Left cardiac atrium (tissue), 4 donors: ENCODE measurements at regions of chr6 and their contacts with region 1.

Region 1: GRCh38 chr6:148250975-148251685 is 91.5 kb upstream of the SASH1 start:
- DNase-seq: no peak
- ATAC-seq: peak; percentile 72 to 73

Region 2: DNA sequence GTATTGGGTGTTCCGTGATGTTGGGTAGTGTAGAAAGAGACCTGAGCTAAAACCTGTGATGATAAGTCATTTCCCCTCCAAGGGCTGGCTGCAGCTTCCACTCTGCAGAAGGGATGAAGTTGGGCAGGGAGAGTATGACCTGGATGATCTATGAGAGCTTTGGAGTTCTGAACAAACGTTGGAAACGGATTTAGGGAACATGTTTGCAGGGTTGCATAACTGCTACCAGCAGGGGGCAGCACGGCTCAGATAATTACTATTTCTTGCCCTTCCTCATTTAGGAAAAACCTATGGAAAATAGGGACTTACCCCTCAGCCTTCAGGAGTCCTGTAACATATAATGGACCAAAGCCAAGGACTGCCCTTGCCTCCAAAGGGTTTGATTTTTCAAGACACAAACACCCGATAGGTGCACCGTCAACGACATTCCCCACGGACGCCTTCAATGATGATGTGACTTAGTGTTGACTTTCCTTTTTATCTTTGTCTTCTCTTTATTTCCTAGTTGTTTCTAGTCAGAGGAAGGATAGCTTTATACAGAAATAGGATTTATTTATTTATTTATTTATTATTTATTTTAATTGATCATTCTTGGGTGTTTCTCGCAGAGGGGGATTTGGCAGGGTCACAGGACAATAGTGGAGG is 73.4 kb before region 1 on chr6:
- intact Hi-C with region 1: loop called (anchors 5 kb)
- DNase-seq: peak; percentile 75
- ATAC-seq: peak in 1 of 2 donors; percentile 51